ENCODE measurements at regions of chr3 and their contacts with region 1.

Region 1: GRCh38 chr3:77586216-77586615 is 546.3 kb downstream of the ROBO2 start:
- DNase-seq: no peak
- H3K4me3 ChIP-seq: no peak overlapping the region
- H3K27ac ChIP-seq: no peak overlapping the region
- H3K4me1 ChIP-seq: no peaks in the 10 kb centered on the region
- H3K27me3 ChIP-seq: no peaks in the 10 kb centered on the region
- CTCF ChIP-seq: no peak

Region 2: GRCh38 chr3:77475507-77475906 is 110.7 kb before region 1 on chr3:
- CTCF ChIA-PET with region 1: no interaction called
- POLR2A ChIA-PET with region 1: no interaction called
- intact Hi-C with region 1: no loop called
- DNase-seq: no peak
- H3K4me3 ChIP-seq: no peak overlapping the region
- H3K27ac ChIP-seq: no peak overlapping the region
- H3K4me1 ChIP-seq: no peaks in the 10 kb centered on the region
- H3K27me3 ChIP-seq: no peaks in the 10 kb centered on the region
- CTCF ChIP-seq: no peak

Region 3: GRCh38 chr3:77620009-77620408 is 33.8 kb after region 1 on chr3:
- CTCF ChIA-PET with region 1: interaction called, 16 read pairs
- POLR2A ChIA-PET with region 1: no interaction called
- intact Hi-C with region 1: no loop called
- DNase-seq: no peak
- H3K4me3 ChIP-seq: no peak overlapping the region
- H3K27ac ChIP-seq: no peak overlapping the region
- H3K4me1 ChIP-seq: no peaks in the 10 kb centered on the region
- H3K27me3 ChIP-seq: no peaks in the 10 kb centered on the region
- CTCF ChIP-seq: no peak

Measured in PC-9 (cell line).